ENCODE measurements at regions of chr6 and their contacts with region 1.

Region 1: GRCh38 chr6:169701954-169702839 is at the starts of genes C6orf120 and WDR27:
- DNase-seq: peak; percentile 91 to 97 (median 94)
- H3K4me3 ChIP-seq: peak within 1 kb of the TSS; percentile 68 to 99 (median 93)
- H3K27ac ChIP-seq: peak within 1 kb of the TSS; percentile 46 to 98 (median 91)
- H3K27me3 ChIP-seq: no peaks in the 10 kb centered on the region
- CTCF ChIP-seq: peak in 40 of 56 donors; percentile 8 to 61 (median 35)
- total RNA-seq, gene C6orf120: 20.7 to 34.2 (median 27.7) TPM
- total RNA-seq, gene WDR27: 35.8 to 79.9 (median 53.5) TPM

Region 2: DNA sequence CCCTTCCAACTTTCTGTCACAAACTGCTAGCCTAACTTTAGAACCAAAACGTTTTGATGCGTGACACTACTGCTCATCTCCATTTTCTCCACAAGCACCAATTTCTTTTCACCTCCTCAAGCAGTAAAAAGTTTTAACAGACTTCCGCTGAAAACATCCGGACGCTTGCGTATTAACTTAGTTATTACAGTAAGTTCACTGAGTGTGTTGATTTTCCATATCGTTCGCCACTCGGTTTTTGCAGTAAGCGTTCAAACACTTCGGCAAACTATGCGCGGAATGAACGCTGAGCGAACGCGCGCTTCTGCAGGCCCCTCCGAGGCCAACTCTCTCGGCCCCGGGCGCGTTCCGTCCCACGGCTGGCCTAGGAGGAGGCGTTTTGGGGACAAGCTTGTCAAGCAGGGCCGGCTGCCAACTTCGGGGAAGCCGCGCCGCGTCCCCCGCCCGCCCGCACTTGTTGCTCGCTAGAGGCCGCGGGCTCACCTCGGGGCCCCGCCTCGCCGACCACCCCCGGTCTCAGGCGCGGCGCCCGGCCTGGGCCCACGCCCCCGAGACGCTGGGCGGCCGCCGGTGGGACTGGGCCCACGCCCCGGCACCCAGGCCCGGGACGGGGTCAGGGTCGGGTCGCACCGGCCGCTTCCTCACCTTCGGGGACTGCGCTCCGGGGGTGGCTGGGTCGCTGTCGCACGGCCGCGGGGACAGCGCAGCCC is 21.2 kb after region 1 on chr6:
- intact Hi-C with region 1: loop called (anchors 1 to 2 kb)
- DNase-seq: peak; percentile 60 to 85 (median 71)
- H3K4me3 ChIP-seq: peak overlapping the region; percentile 54 to 86 (median 75)
- H3K27ac ChIP-seq: peak overlapping the region in 58 of 59 donors; percentile 11 to 93 (median 81)
- H3K27me3 ChIP-seq: no peaks in the 10 kb centered on the region
- CTCF ChIP-seq: peak in 6 of 56 donors; percentile 11 to 26 (median 18)